ENCODE measurements at regions of chr10 and their contacts with region 1.

Region 1: DNA sequence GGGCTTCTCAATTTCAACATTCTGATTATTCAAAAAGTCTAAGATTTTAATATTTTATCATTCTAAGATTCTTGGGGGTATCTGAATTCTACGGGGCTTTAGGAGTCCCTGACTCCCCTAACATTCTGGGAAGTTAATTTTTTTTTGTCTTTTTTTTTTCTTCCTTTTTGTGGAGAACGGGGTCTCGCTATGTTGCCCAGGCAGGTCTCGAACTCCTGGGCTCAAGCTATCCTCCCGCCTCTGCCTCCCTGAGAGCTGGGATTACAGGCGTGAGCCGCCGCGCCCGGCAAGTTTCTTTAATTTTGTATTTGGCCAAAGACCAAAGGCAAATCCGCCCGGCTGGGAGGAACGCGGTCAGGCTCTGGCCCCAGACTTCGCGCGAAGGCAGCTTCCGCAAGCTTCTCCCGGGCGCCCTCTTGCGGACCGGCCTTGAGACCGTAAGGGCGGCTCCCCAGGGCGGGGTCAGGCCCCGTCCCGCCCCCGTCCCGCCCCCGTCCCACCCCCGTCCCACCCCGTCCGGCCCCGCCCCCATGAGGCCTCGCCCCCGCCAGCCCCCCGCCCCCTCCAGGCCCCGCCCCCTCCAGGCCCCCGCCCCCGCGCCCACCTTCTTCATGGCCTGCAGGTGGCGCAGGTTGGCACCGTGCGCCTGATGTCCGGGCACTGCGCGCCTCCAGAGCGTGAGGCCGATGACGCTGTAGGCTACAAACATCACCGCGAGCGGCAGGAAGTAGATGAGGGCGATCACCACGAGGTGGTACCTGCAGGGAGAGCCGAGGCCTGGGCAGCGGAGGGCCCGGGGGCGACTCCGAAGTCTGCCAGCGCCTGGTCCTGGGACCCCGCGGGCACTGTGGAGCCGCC is 8.2 kb downstream of the TACR2 start:
- DNase-seq: peak; percentile 80
- H3K4me3 ChIP-seq: peak overlapping the region in 2 of 3 experiments; percentile 23 to 26
- H3K27ac ChIP-seq: peak overlapping the region; percentile 20
- H3K4me1 ChIP-seq: peaks cover 17% of the 10 kb centered on the region
- H3K27me3 ChIP-seq: no peaks in the 10 kb centered on the region
- CTCF ChIP-seq: peak; percentile 31 to 76
- POLR2A ChIP-seq: peak; percentile 17

Region 2: DNA sequence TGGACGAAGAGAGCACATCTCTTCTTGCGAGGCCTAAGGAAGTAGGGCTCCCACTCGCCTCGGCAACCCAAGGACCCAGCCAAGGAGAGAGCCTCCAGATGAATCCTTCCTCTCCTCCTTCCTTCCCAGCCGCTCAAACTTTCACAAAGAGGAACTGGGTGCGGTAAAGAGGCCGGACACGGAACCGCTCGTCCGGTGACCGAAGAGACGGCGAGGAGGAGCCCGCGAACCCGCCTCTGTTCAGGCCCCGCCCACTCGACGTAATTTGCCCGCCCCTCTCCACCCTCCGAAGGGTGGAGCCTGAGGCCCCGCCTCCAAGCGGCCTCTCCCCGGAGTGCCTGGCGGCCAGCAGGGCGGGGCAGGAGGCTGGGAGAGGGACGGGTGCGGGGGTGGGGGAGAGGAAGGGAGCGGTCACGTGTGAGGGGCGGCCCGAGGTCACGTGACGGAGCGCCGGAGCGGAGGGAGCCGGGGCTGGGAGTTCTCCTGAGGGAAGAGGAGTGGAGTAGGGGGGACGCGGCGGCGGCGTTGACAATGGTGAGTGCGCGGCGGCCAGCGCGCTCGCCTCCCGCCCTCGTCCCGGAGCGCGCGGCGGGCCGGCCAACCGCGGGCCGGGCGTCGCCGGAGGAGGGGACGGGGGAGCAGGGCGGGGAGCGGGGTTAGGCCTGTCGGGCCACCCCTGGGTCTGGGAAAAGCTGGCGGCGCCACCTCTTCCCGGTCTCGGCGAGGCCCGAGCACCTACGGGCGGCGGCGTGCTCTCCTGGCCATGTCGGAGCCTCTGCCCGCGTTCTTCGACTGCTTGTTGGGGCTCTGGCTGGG is 284.6 kb before region 1 on chr10 and contains the start of gene VPS26A:
- CTCF ChIA-PET with region 1: interaction called, 4 read pairs
- POLR2A ChIA-PET with region 1: interaction called, 3 read pairs
- dilution Hi-C with region 1: no loop called
- intact Hi-C with region 1: loop called (anchors 5 kb)
- DNase-seq: peak; percentile 99
- H3K4me3 ChIP-seq: peak within 1 kb of the TSS; percentile 50 to 82 (median 81)
- H3K27ac ChIP-seq: peak within 1 kb of the TSS; percentile 79
- H3K4me1 ChIP-seq: peaks cover 16% of the 10 kb centered on the region
- H3K27me3 ChIP-seq: no peaks in the 10 kb centered on the region
- CTCF ChIP-seq: peak; percentile 35 to 47
- POLR2A ChIP-seq: peak; percentile 83
- total RNA-seq, gene VPS26A: 55.8 and 60.3 TPM in 2 replicates

Region 3: GRCh38 chr10:69237528-69238159 is 170.9 kb before region 1 on chr10:
- CTCF ChIA-PET with region 1: interaction called, 16 read pairs
- POLR2A ChIA-PET with region 1: no interaction called
- dilution Hi-C with region 1: no loop called
- intact Hi-C with region 1: loop called (anchors 1 kb)
- DNase-seq: peak; percentile 81
- H3K4me3 ChIP-seq: no peak overlapping the region
- H3K27ac ChIP-seq: no peak overlapping the region
- H3K4me1 ChIP-seq: peaks cover 16% of the 10 kb centered on the region
- H3K27me3 ChIP-seq: no peaks in the 10 kb centered on the region
- CTCF ChIP-seq: peak; percentile 81 to 90
- POLR2A ChIP-seq: no peak

Region 4: DNA sequence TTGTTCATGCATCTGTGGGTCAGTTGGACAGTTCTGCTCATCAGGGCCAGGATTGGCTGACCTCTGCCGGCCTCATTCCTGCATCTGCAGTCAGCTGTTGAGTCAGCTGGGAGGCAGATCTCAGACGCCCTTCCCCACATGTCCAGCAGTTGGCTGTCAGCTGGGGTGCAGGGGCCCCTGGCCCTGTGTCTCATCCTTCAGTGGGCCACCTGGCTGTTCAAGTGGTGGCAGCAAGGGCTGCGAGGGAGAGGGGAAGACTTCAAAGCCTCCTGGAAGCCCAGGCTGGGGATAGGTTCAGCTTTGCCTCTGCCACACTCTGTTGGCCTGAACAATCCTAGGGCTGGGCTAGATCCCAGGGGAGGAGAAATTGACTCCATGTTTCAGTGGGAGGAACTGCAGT is 25.0 kb before region 1 on chr10:
- CTCF ChIA-PET with region 1: no interaction called
- POLR2A ChIA-PET with region 1: no interaction called
- dilution Hi-C with region 1: no loop called
- intact Hi-C with region 1: no loop called
- DNase-seq: no peak
- H3K4me3 ChIP-seq: no peak overlapping the region
- H3K27ac ChIP-seq: no peak overlapping the region
- H3K4me1 ChIP-seq: peaks cover under 1% of the 10 kb centered on the region
- H3K27me3 ChIP-seq: no peaks in the 10 kb centered on the region
- CTCF ChIP-seq: no peak
- POLR2A ChIP-seq: no peak

Region 5: DNA sequence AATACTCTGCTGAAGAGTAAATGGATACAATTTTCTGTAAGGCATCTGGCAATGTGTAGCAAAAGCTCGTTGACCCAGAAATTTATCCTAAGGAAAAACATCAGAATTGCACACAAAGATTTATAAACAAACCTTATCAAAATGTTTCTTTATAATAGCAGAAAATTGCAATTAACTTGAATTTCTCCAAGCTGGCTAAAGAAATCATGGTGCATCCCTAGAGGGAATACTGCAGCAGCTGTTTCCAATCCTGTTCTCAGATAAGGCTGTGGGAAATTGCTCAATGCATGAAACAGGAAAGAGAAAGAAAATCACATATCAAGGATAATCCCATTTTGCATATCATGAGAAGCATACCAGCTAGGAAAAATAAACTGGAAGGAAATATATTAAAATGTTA is 10.6 kb before region 1 on chr10:
- CTCF ChIA-PET with region 1: interaction called, 21 read pairs
- POLR2A ChIA-PET with region 1: interaction called, 4 read pairs
- dilution Hi-C with region 1: no loop called
- intact Hi-C with region 1: no loop called
- DNase-seq: no peak
- H3K4me3 ChIP-seq: no peak overlapping the region
- H3K27ac ChIP-seq: no peak overlapping the region
- H3K4me1 ChIP-seq: no peaks in the 10 kb centered on the region
- H3K27me3 ChIP-seq: no peaks in the 10 kb centered on the region
- CTCF ChIP-seq: no peak
- POLR2A ChIP-seq: no peak

Region 6: GRCh38 chr10:69494626-69495558 is 86.3 kb after region 1 on chr10:
- CTCF ChIA-PET with region 1: interaction called, 10 read pairs
- POLR2A ChIA-PET with region 1: no interaction called
- dilution Hi-C with region 1: no loop called
- intact Hi-C with region 1: no loop called
- DNase-seq: no peak
- H3K4me3 ChIP-seq: no peak overlapping the region
- H3K27ac ChIP-seq: no peak overlapping the region
- H3K4me1 ChIP-seq: peaks cover 12% of the 10 kb centered on the region
- H3K27me3 ChIP-seq: no peaks in the 10 kb centered on the region
- CTCF ChIP-seq: no peak
- POLR2A ChIP-seq: no peak

Region 7: GRCh38 chr10:69515699-69516259 is 107.2 kb after region 1 on chr10:
- CTCF ChIA-PET with region 1: interaction called, 16 read pairs
- POLR2A ChIA-PET with region 1: no interaction called
- dilution Hi-C with region 1: no loop called
- intact Hi-C with region 1: no loop called
- DNase-seq: peak; percentile 69
- H3K4me3 ChIP-seq: no peak overlapping the region
- H3K27ac ChIP-seq: no peak overlapping the region
- H3K4me1 ChIP-seq: no peaks in the 10 kb centered on the region
- H3K27me3 ChIP-seq: peaks cover 0 to 2% of the 10 kb centered on the region in 2 experiments
- CTCF ChIP-seq: peak; percentile 83 to 92
- POLR2A ChIP-seq: no peak

Region 8: GRCh38 chr10:69549959-69550358 is 141.4 kb after region 1 on chr10:
- CTCF ChIA-PET with region 1: no interaction called
- POLR2A ChIA-PET with region 1: no interaction called
- dilution Hi-C with region 1: no loop called
- intact Hi-C with region 1: no loop called
- DNase-seq: no peak
- H3K4me3 ChIP-seq: no peak overlapping the region
- H3K27ac ChIP-seq: no peak overlapping the region
- H3K4me1 ChIP-seq: no peaks in the 10 kb centered on the region
- H3K27me3 ChIP-seq: no peaks in the 10 kb centered on the region
- CTCF ChIP-seq: no peak
- POLR2A ChIP-seq: no peak